Head of caudate nucleus (tissue), 42 donors: ENCODE measurements at regions of chr2 and their contacts with region 1.

Region 1: GRCh38 chr2:152627351-152627957 is 89.8 kb downstream of the PRPF40A start:
- DNase-seq: peak in 1 of 42 donors; percentile 62

Region 2: GRCh38 chr2:152189622-152190495 is 437.6 kb before region 1 on chr2:
- intact Hi-C with region 1: loop called (anchors 5 kb)
- DNase-seq: peak in 36 of 42 donors; percentile 9 to 80 (median 60)

Region 3: GRCh38 chr2:152407204-152407721 is 220.2 kb before region 1 on chr2:
- intact Hi-C with region 1: no loop called
- DNase-seq: peak; percentile 48 to 90 (median 76)

Region 4: GRCh38 chr2:152549423-152549822 is 78.0 kb before region 1 on chr2:
- intact Hi-C with region 1: no loop called
- DNase-seq: no peak

Region 5: GRCh38 chr2:152566728-152567069 is 60.8 kb before region 1 on chr2:
- intact Hi-C with region 1: loop called (anchors 10 kb)
- DNase-seq: no peak